ENCODE measurements at regions of chr10 and their contacts with region 1.

Region 1: GRCh38 chr10:43671656-43672531 is 23.2 kb upstream of the ZNF32 start:
- DNase-seq: peak; percentile 42
- H3K4me3 Mint-ChIP-seq: no peak overlapping the region
- H3K27ac Mint-ChIP-seq: no peak overlapping the region
- H3K4me1 Mint-ChIP-seq: peaks cover 3% of the 10 kb centered on the region
- H3K27me3 Mint-ChIP-seq: peaks cover 36% of the 10 kb centered on the region

Region 2: GRCh38 chr10:43683451-43684291 is 11.8 kb after region 1 on chr10:
- CTCF ChIA-PET with region 1: interaction called, 20 read pairs
- POLR2A ChIA-PET with region 1: no interaction called
- intact Hi-C with region 1: loop called (anchors 1 kb)
- DNase-seq: peak; percentile 42
- H3K4me3 Mint-ChIP-seq: no peak overlapping the region
- H3K27ac Mint-ChIP-seq: no peak overlapping the region
- H3K4me1 Mint-ChIP-seq: peaks cover 2% of the 10 kb centered on the region
- H3K27me3 Mint-ChIP-seq: peaks cover 22% of the 10 kb centered on the region

Region 3: GRCh38 chr10:43816351-43817321 is 144.7 kb after region 1 on chr10:
- CTCF ChIA-PET with region 1: no interaction called
- POLR2A ChIA-PET with region 1: no interaction called
- intact Hi-C with region 1: no loop called
- DNase-seq: peak; percentile 90
- H3K4me3 Mint-ChIP-seq: peak overlapping the region; percentile 9
- H3K27ac Mint-ChIP-seq: peak overlapping the region; percentile 53
- H3K4me1 Mint-ChIP-seq: peaks cover 30% of the 10 kb centered on the region
- H3K27me3 Mint-ChIP-seq: no peaks in the 10 kb centered on the region

Region 4: GRCh38 chr10:44030143-44030542 is 358.2 kb after region 1 on chr10:
- CTCF ChIA-PET with region 1: no interaction called
- POLR2A ChIA-PET with region 1: no interaction called
- intact Hi-C with region 1: loop called (anchors 1 kb)
- DNase-seq: peak; percentile 53
- H3K4me3 Mint-ChIP-seq: no peak overlapping the region
- H3K27ac Mint-ChIP-seq: no peak overlapping the region
- H3K4me1 Mint-ChIP-seq: no peaks in the 10 kb centered on the region
- H3K27me3 Mint-ChIP-seq: peaks cover 7% of the 10 kb centered on the region

Region 5: DNA sequence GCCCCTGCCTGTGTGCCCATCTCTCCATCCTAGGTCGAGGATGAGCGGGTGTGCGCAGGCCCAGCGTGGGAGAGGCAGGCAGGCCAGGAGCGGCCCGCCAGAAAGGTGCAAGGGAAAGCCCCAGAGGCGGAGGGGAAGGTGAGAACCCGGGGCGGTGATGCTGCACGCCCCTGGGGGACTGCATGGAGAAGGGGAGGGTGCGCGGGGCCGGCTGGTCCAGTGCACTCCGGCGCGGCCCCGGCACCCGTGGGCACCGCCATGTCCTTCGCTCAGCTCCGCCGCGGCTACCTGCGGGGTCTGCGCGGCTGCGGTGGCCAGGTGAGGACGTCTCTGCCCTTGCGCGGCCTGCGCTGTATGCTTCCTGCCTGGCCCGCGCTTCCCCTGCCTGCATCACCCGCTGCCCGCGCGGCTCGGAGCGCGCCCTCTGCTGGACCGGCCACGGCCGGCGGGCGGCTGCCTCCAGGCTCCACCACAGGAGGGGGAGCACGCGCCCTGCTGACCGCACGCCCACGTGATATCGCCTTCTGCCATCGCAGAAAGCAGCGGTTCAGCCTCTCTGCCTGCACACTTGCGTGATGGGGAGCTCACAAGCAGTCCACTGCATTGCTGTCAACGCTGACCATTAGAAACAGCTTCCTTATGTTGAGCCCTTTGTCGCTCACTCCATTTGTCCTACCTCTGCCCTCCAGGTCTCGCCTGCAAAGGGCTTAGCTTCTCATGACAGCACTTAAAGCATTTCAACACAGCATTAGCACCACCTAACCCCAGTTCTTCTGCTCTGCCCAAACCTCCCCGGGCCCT is 639.1 kb after region 1 on chr10:
- CTCF ChIA-PET with region 1: interaction called, 4 read pairs
- POLR2A ChIA-PET with region 1: no interaction called
- intact Hi-C with region 1: loop called (anchors 1 kb)
- DNase-seq: peak; percentile 82
- H3K4me3 Mint-ChIP-seq: no peak overlapping the region
- H3K27ac Mint-ChIP-seq: no peak overlapping the region
- H3K4me1 Mint-ChIP-seq: peaks cover 4% of the 10 kb centered on the region
- H3K27me3 Mint-ChIP-seq: peaks cover 9% of the 10 kb centered on the region

Region 6: DNA sequence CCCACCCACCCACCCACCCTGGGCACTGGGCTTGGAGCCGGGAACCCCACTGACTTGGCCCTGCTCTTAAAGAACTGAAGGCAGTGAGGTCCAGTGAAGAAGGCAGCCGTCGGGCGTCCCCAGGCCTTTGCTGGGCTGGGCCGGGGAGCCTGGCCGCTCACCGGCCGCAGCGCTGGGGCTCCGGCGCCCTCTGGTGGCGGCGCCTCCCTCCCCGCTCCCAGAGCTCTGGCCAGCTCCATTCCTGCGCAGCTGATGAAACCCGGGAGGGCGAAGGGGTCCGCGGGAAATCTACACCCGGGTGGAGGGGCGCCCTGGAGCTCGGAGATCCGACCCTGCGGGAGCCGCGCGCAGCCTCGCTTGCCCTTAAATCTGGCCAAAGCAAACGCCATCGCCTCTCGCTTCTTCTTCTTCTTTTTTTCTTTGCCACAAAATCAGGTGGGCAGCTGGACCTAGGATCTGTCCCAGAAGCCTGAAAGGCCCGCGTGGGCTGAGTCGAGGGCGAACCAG is 714.7 kb after region 1 on chr10:
- CTCF ChIA-PET with region 1: interaction called, 44 read pairs
- POLR2A ChIA-PET with region 1: no interaction called
- intact Hi-C with region 1: loop called (anchors 5 kb)
- DNase-seq: peak; percentile 40
- H3K4me3 Mint-ChIP-seq: no peak overlapping the region
- H3K27ac Mint-ChIP-seq: no peak overlapping the region
- H3K4me1 Mint-ChIP-seq: peaks cover 2% of the 10 kb centered on the region
- H3K27me3 Mint-ChIP-seq: peaks cover 37% of the 10 kb centered on the region

Region 7: DNA sequence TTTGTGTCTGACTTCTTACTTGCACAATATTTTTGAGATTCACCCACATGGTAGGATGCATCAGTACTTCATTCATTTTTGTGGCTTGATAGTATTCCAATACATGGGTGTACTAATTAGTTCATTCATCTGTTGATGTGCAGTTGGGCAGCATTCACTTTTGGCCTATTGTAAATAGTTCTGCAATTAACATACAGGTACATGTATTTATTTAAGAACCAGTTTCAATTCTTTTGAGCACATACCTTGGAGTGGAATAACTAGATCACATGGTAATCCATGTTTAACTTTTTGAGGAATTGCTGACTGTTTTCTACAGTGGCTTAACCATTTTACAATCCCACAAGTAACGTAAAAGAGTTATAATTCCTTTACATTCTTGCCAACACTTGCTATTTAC is 854.9 kb after region 1 on chr10:
- CTCF ChIA-PET with region 1: no interaction called
- POLR2A ChIA-PET with region 1: no interaction called
- intact Hi-C with region 1: no loop called
- DNase-seq: no peak
- H3K4me3 Mint-ChIP-seq: no peak overlapping the region
- H3K27ac Mint-ChIP-seq: no peak overlapping the region
- H3K4me1 Mint-ChIP-seq: no peaks in the 10 kb centered on the region
- H3K27me3 Mint-ChIP-seq: no peaks in the 10 kb centered on the region

Region 8: DNA sequence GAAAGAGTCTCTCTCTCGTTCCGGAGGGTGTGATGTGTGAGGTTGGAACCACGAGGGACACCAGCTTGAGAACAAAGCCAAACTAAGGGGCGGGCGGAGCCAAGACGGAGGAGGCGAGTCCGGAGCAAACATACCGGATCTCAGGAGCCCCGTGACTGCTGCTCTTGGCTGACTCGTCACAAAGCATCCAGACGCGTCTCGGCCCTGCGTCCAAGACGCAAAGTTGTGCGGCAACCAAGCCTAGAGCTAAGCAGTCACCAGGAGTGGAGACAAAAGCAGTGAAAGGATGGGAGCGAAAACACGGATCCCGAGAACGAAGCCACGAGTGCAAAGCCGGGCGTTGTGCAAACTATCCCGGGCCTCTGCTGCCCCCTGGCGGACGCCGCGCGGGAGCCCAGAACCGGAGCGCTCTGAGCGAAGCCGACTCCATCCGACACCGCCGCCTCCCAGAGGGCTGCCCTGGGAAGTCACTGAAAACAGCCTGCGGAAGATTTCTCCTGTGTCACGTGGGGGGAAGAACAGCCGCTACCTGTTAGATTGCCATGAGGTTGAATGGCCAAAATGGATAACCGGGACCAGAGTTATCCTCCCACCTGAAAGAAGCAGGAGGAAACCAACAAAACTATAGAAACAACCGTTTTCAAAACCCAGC is 1192.9 kb after region 1 on chr10:
- CTCF ChIA-PET with region 1: interaction called, 3 read pairs
- POLR2A ChIA-PET with region 1: no interaction called
- intact Hi-C with region 1: loop called (anchors 2 kb)
- DNase-seq: peak; percentile 84
- H3K4me3 Mint-ChIP-seq: peak overlapping the region; percentile 81
- H3K27ac Mint-ChIP-seq: no peak overlapping the region
- H3K4me1 Mint-ChIP-seq: peaks cover 7% of the 10 kb centered on the region
- H3K27me3 Mint-ChIP-seq: peaks cover 36% of the 10 kb centered on the region

Measured in activated CD4-positive, alpha-beta memory T cell treated with anti-CD3 and anti-CD28 coated beads for 36 hours (primary cell).